ENCODE measurements at regions of chr20 and their contacts with region 1.

Region 1: DNA sequence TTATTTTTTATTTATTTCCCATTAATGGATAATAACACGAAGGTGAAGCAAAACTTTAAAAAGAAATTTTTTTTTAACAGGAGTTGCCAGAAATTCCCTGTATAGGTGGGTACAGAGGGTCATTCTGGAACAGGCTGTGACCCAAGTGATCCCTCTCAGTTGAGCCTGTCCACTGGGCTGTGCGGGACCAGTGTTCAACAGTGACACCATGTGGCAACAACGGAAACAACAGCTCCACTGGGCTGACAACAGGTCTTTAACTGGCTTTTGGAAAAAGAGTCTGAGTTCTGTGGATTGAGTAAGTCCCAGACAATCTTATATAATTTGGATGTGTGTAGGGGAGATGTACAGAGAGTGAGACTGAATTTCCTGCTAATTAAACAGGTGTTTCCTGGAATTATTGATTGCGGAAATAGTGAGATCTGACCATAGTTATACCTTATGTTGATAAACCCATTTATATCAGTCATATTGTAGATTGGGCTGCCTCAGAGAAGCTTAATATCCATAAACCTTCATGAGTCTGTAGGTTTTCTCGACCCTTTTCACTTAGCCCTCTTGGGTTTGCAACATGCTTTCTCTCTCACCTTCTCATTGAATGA is 17.6 kb downstream of the KIAA1755 start:
- H3K4me3 ChIP-seq: no peak overlapping the region
- H3K27ac ChIP-seq: no peak overlapping the region
- H3K4me1 ChIP-seq: no peaks in the 10 kb centered on the region
- CTCF ChIP-seq: no peak

Region 2: GRCh38 chr20:38255393-38255792 is 12.4 kb after region 1 on chr20:
- CTCF ChIA-PET with region 1: interaction called, 30 read pairs
- POLR2A ChIA-PET with region 1: no interaction called
- H3K4me3 ChIP-seq: no peak overlapping the region
- H3K27ac ChIP-seq: no peak overlapping the region
- H3K4me1 ChIP-seq: no peaks in the 10 kb centered on the region
- CTCF ChIP-seq: no peak

Region 3: DNA sequence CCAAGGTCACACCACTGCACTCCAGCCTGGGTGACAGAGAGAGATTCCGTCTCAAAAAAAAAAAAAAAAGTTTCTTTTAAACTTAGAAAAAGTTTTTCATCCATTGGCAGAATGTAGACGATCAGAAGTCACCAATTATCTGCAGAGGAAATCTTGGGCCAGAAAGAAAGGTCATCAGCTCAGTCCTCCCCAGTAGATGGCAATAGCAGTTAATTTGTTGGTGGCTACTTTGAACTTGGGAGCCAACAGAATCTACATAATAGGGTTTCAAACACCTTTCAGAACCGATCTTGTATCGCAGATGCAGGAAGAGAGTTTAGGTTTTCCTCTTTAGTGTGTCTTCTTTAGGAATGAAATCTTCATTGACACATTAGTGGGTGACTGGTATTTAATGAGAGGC is 145.0 kb after region 1 on chr20:
- CTCF ChIA-PET with region 1: no interaction called
- POLR2A ChIA-PET with region 1: no interaction called
- H3K4me3 ChIP-seq: no peak overlapping the region
- H3K27ac ChIP-seq: no peak overlapping the region
- H3K4me1 ChIP-seq: no peaks in the 10 kb centered on the region
- CTCF ChIP-seq: no peak

Measured in HEK293 (cell line).